ENCODE measurements at regions of chr19 and their contacts with region 1.

Region 1: GRCh38 chr19:507286-508219 is at the start of gene TPGS1:
- DNase-seq: peak; percentile 93 to 96
- ATAC-seq: peak; percentile 89 to 90 (median 89)
- H3K4me3 ChIP-seq: peak within 1 kb of the TSS; percentile 100
- H3K27ac ChIP-seq: peak within 1 kb of the TSS; percentile 97
- H3K4me1 ChIP-seq: peaks cover 14% of the 10 kb centered on the region
- H3K27me3 ChIP-seq: no peaks in the 10 kb centered on the region
- CTCF ChIP-seq: no peak
- total RNA-seq, gene TPGS1: 8.9 to 16.3 (median 10.2) TPM

Region 2: GRCh38 chr19:531009-531752 is 23.6 kb after region 1 on chr19:
- intact Hi-C with region 1: loop called (anchors 2 kb)
- DNase-seq: peak; percentile 87 to 92
- ATAC-seq: peak; percentile 78 to 86 (median 81)
- H3K4me3 ChIP-seq: peak overlapping the region; percentile 89
- H3K27ac ChIP-seq: peak overlapping the region; percentile 98
- H3K4me1 ChIP-seq: peaks cover 27% of the 10 kb centered on the region
- H3K27me3 ChIP-seq: peaks cover 0 to 5% (median 0%) of the 10 kb centered on the region in 3 donors
- CTCF ChIP-seq: no peak

Measured in psoas muscle (tissue), 8 donors.